Endothelial cell of umbilical vein (primary cell): ENCODE measurements at regions of chr2 and their contacts with region 1.

Region 1: GRCh38 chr2:189037518-189037917 is 63.3 kb downstream of the COL3A1 start:
- DNase-seq: peak; percentile 48
- H3K4me3 ChIP-seq: no peak overlapping the region
- H3K27ac ChIP-seq: no peak overlapping the region
- H3K4me1 ChIP-seq: peaks cover 8% of the 10 kb centered on the region
- H3K27me3 ChIP-seq: no peaks in the 10 kb centered on the region
- CTCF ChIP-seq: no peak
- POLR2A ChIP-seq: no peak

Region 2: GRCh38 chr2:189002079-189002478 is 35.4 kb before region 1 on chr2:
- CTCF ChIA-PET with region 1: no interaction called
- POLR2A ChIA-PET with region 1: no interaction called
- dilution Hi-C with region 1: no loop called
- intact Hi-C with region 1: loop called (anchors 5 kb)
- DNase-seq: peak; percentile 72
- H3K4me3 ChIP-seq: no peak overlapping the region
- H3K27ac ChIP-seq: peak overlapping the region; percentile 11
- H3K4me1 ChIP-seq: peaks cover 15% of the 10 kb centered on the region
- H3K27me3 ChIP-seq: no peaks in the 10 kb centered on the region
- CTCF ChIP-seq: no peak
- POLR2A ChIP-seq: peak; percentile 30